Gastrocnemius medialis (tissue), 4 donors: ENCODE measurements at regions of chr22 and their contacts with region 1.

Region 1: DNA sequence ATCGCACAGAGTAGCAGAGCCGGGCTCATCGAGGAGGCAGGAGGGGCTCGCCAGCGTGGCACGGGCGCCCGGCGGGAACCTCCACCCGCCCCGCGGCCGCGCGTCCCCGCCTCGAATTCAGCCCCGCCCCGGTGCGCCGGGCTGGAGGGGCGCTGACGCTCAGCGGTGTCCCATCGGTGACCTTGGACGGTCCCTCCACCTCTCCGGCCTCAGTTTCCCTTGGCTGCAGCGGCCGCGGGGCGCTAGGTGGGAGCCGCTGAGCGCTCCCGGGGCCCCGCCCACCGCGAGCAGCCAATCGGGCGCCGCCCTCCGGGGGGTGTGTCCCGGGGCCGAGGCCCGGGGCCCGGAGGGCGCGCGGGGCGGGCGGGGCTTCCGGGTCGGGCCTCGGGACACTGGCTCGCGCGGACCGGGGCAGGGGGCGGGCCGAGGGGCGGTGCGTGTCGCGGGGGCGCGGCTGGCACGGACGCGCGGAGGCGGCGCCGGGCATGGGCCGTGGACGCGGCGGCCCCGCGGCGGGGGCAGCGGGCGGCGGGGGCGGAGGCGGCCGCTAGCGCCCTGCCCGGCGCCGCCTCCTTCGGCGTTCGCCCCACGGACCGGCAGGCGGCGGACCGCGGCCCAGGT is at the start of gene PPARA:
- DNase-seq: peak; percentile 85 to 90
- ATAC-seq: peak; percentile 75 to 81
- H3K4me3 ChIP-seq: peak within 1 kb of the TSS; percentile 83 to 92 (median 86)
- H3K27ac ChIP-seq: peak within 1 kb of the TSS; percentile 96 to 98 (median 98)
- H3K4me1 ChIP-seq: peaks cover 35 to 40% of the 10 kb centered on the region in 2 donors
- H3K27me3 ChIP-seq: no peaks in the 10 kb centered on the region
- CTCF ChIP-seq: no peak
- POLR2A ChIP-seq: peak; percentile 83 to 84
- total RNA-seq, gene PPARA: 29.6 to 74.8 (median 57.9) TPM

Region 2: DNA sequence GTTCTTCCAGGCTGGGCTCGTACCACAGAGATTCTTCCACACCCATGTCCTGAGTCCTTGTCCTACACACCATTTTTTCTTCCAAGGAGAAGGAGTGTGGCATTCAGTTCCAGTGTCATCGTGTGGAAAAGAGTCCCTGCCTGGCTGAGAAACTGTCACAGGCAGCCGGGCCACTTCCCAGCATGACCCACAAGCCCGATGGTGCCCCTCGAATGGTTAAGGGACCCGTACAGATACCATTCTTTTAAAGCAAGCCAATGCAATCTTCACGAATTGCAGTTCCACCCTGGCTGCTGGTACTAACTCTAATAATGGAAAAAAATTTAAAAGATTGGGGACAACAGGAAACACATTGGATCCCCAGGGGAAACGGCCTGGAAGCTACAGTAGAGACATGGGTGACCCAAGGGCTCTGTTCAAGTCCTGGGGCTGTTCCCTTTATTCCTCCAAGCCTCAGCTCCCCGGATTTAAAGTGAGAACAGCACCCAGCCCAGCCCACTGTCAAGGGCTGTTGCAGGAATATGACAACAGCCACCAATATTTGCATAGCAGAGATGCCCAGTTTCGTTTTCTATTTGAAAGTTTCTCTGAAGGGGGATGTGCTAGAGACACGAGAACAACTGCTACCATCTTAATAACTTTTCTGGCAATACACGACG is 92.3 kb before region 1 on chr22:
- in situ Hi-C with region 1: no loop called
- intact Hi-C with region 1: no loop called
- DNase-seq: peak in 1 of 2 donors; percentile 76
- ATAC-seq: peak; percentile 2 to 53
- H3K4me3 ChIP-seq: peak overlapping the region; percentile 73 to 90 (median 84)
- H3K27ac ChIP-seq: peak overlapping the region; percentile 98 to 99 (median 98)
- H3K4me1 ChIP-seq: peaks cover 73 to 78% of the 10 kb centered on the region in 2 donors
- H3K27me3 ChIP-seq: no peaks in the 10 kb centered on the region
- CTCF ChIP-seq: no peak
- POLR2A ChIP-seq: peak; percentile 35 to 61

Region 3: GRCh38 chr22:46196278-46196677 is 46.1 kb after region 1 on chr22:
- in situ Hi-C with region 1: no loop called
- intact Hi-C with region 1: loop called (anchors 2 kb)
- DNase-seq: peak; percentile 79 to 86
- ATAC-seq: peak; percentile 93 to 94
- H3K4me3 ChIP-seq: peak overlapping the region in 1 of 4 donors; percentile 5
- H3K27ac ChIP-seq: peak overlapping the region; percentile 76 to 93 (median 84)
- H3K4me1 ChIP-seq: peaks cover 20 to 31% of the 10 kb centered on the region in 2 donors
- H3K27me3 ChIP-seq: no peaks in the 10 kb centered on the region
- CTCF ChIP-seq: no peak
- POLR2A ChIP-seq: no peak

Region 4: GRCh38 chr22:46290121-46290842 is 140.1 kb after region 1 on chr22:
- in situ Hi-C with region 1: no loop called
- intact Hi-C with region 1: loop called (anchors 2 kb)
- DNase-seq: peak; percentile 44 to 53
- ATAC-seq: peak; percentile 66 to 78
- H3K4me3 ChIP-seq: no peak overlapping the region
- H3K27ac ChIP-seq: peak overlapping the region in 3 of 4 donors; percentile 68 to 77 (median 74)
- H3K4me1 ChIP-seq: peaks cover 11 to 14% of the 10 kb centered on the region in 2 donors
- H3K27me3 ChIP-seq: no peaks in the 10 kb centered on the region
- CTCF ChIP-seq: no peak
- POLR2A ChIP-seq: no peak